HCT116 (cell line): ENCODE measurements at regions of chr14 and their contacts with region 1.

Region 1: GRCh38 chr14:78157494-78158456 is 12.4 kb upstream of the NRXN3 start:
- DNase-seq: no peak
- ATAC-seq: no peak
- H3K4me3 ChIP-seq: no peak overlapping the region
- H3K27ac ChIP-seq: no peak overlapping the region
- H3K4me1 ChIP-seq: no peaks in the 10 kb centered on the region
- H3K27me3 ChIP-seq: peaks cover 27% of the 10 kb centered on the region
- CTCF ChIP-seq: no peak
- POLR2A ChIP-seq: no peak
- RAD21 ChIP-seq: no peak

Region 2: GRCh38 chr14:77849711-77850110 is 308.1 kb before region 1 on chr14:
- CTCF ChIA-PET with region 1: no interaction called
- POLR2A ChIA-PET with region 1: no interaction called
- RAD21 ChIA-PET with region 1: no interaction called
- intact Hi-C with region 1: loop called (anchors 10 kb)
- DNase-seq: peak; percentile 29
- ATAC-seq: peak; percentile 76
- H3K4me3 ChIP-seq: no peak overlapping the region
- H3K27ac ChIP-seq: no peak overlapping the region
- H3K4me1 ChIP-seq: peaks cover 16 to 23% of the 10 kb centered on the region in 2 experiments
- H3K27me3 ChIP-seq: no peaks in the 10 kb centered on the region
- CTCF ChIP-seq: no peak
- POLR2A ChIP-seq: no peak
- RAD21 ChIP-seq: no peak